GM10248 (cell line): ENCODE measurements at regions of chr13 and their contacts with region 1.

Region 1: GRCh38 chr13:25085125-25085742 is 10.7 kb upstream of the PABPC3 start:
- DNase-seq: peak; percentile 56
- CTCF ChIP-seq: peak; percentile 70

Region 2: GRCh38 chr13:24443366-24443765 is 641.9 kb before region 1 on chr13:
- CTCF ChIA-PET with region 1: no interaction called
- POLR2A ChIA-PET with region 1: no interaction called
- DNase-seq: no peak
- CTCF ChIP-seq: no peak

Region 3: GRCh38 chr13:25095862-25096453 is 10.7 kb after region 1 on chr13 and contains the start of gene PABPC3:
- CTCF ChIA-PET with region 1: interaction called, 14 read pairs
- POLR2A ChIA-PET with region 1: no interaction called
- DNase-seq: no peak
- CTCF ChIP-seq: no peak